ENCODE measurements at regions of chr19 and their contacts with region 1.

Region 1: DNA sequence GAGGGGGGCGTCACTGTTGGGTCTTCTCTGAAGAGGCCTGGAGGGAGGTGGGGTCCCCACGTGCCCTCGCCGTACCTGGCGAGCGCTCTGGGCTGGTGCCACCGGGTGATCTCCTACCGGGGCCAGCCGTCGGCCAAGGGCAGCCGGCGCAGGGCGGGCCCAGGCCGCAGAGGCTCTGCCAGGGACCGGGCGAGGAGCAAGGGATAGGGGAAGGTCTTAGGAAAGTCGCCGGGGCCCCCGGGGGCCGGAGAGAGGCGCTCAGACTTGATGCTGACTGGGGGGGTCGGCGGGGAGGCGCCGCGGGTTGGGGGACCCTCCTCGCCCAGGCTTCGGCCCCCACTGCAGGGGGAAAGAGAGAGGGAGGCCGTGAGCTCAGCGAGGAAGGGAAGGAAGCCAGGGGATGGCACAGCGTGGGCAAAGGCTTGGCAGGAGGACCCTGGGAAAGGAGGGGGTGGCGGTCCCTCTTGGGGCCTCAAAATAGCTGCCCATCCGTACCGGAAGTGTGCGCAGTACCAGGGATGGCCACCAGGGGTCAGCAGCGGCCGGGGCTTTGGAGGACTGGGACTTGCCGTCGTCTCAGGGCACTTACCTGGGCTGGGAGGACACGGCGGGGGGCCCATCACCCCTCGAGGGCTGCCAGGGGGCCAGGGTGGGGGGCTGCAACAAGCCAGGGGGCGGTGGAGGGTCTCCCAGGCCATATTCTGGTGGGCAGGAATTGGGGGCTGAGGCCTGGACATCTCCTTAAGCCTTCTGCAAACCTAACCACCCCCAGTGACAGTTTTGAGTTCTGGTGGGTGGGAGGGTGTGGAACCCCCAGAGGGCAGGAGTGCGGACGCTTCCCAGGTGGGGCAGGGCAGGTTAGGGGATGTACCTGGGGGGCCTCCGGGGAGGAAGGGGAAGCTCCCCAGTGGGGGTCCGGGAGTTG is 7.7 kb upstream of the TMEM161A start:
- DNase-seq: peak; percentile 66 to 97
- H3K4me3 ChIP-seq: no peak overlapping the region
- CTCF ChIP-seq: peak in 1 of 3 donors; percentile 85
- POLR2A ChIP-seq: no peak

Region 2: GRCh38 chr19:19192078-19192882 is 46.3 kb after region 1 on chr19 and contains the starts of genes BORCS8 and RFXANK:
- intact Hi-C with region 1: no loop called
- DNase-seq: peak; percentile 100
- H3K4me3 ChIP-seq: peak within 1 kb of the TSS; percentile 89
- CTCF ChIP-seq: no peak
- POLR2A ChIP-seq: no peak
- total RNA-seq, gene BORCS8: 4.4 to 15.2 (median 10.9) TPM
- total RNA-seq, gene RFXANK: 40.1 to 59.0 (median 48.8) TPM

Region 3: DNA sequence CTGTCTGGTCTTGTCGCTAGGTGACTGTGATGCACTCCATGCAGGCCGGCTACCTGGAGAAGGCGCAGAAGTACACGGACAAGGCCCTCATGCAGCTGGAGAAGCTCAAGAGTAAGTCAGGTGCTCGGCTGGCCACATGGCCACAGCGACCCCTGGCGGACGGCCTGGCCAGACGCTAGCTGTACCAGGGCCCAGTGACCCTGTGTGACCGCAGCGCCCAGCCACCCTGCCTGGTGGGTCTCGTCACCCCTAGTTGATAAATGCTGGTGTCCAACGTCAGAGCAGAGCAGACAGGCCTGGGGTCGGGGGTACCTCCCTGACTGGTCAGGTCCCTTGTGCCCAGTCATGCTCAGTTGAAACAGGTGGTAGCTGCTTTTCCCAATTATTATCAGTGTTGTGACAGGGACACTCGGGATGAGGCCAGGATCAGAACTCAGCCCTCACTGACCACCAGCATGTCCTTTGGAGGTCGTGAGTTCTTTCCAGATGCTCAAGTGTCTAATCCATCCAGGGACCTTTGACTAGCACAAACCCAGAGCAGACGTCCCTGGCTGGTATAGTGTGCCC is 196.9 kb after region 1 on chr19:
- intact Hi-C with region 1: loop called (anchors 5 kb)
- DNase-seq: no peak
- H3K4me3 ChIP-seq: no peak overlapping the region
- CTCF ChIP-seq: no peak
- POLR2A ChIP-seq: no peak

Measured in lower leg skin (tissue), 4 donors.